Adrenal gland (tissue), 19 donors: ENCODE measurements at regions of chr11 and their contacts with region 1.

Region 1: DNA sequence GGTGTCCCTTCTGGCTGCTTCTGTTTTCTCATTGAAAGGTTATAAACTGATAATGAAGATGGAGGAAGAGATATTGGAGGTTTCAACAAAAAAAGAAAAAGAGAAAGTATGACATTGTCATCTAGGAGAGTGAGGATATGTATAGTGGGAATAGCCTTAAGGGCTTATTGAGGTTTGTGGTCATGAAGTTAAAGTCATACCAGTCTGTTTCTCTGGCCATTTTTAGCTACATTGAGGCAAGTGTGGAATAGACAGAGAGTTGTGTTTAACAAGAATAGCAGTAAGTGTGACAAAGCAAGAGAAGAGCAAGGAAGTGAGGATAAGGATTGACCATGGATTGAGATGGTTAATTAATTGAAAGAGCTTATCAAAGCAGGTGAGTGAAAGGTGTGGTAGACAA is 110.4 kb downstream of the ELP4 start:
- DNase-seq: no peak
- H3K4me3 ChIP-seq: no peak overlapping the region
- H3K27ac ChIP-seq: no peak overlapping the region
- H3K4me1 ChIP-seq: no peaks in the 10 kb centered on the region
- H3K27me3 ChIP-seq: no peaks in the 10 kb centered on the region
- CTCF ChIP-seq: no peak
- POLR2A ChIP-seq: no peak

Region 2: DNA sequence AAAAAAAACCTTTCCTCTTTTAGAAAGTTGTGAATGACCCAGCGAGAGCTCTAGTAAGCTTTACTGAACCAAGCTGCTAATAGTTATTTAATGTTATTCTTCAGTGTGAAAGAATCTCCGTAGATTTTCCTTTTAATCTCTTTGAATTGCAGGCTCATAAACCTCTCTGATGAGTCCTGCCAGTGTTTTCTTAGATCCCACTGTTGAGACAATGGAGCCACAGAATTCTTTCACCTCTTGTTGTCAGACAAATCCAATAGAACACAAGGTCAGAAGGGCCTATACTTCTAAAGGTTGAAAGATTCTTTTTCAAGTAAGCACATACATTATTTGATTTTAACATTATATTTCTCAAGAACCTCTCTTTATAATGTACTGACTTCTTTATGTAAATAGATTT is 198.2 kb before region 1 on chr11:
- intact Hi-C with region 1: no loop called
- DNase-seq: no peak
- H3K4me3 ChIP-seq: no peak overlapping the region
- H3K27ac ChIP-seq: no peak overlapping the region
- H3K4me1 ChIP-seq: no peaks in the 10 kb centered on the region
- H3K27me3 ChIP-seq: no peaks in the 10 kb centered on the region
- CTCF ChIP-seq: no peak
- POLR2A ChIP-seq: no peak

Region 3: GRCh38 chr11:31786996-31787685 is 167.2 kb after region 1 on chr11:
- intact Hi-C with region 1: no loop called
- DNase-seq: no peak
- H3K4me3 ChIP-seq: no peak overlapping the region
- H3K27ac ChIP-seq: no peak overlapping the region
- H3K4me1 ChIP-seq: no peaks in the 10 kb centered on the region
- H3K27me3 ChIP-seq: no peaks in the 10 kb centered on the region
- CTCF ChIP-seq: no peak
- POLR2A ChIP-seq: no peak

Region 4: GRCh38 chr11:31865606-31866300 is 245.8 kb after region 1 on chr11:
- intact Hi-C with region 1: loop called in 1 of 2 experiments (anchors 10 kb)
- DNase-seq: no peak
- H3K4me3 ChIP-seq: no peak overlapping the region
- H3K27ac ChIP-seq: no peak overlapping the region
- H3K4me1 ChIP-seq: no peaks in the 10 kb centered on the region
- H3K27me3 ChIP-seq: peaks cover 8% of the 10 kb centered on the region
- CTCF ChIP-seq: no peak
- POLR2A ChIP-seq: no peak

Region 5: GRCh38 chr11:32071811-32072210 is 451.8 kb after region 1 on chr11:
- intact Hi-C with region 1: no loop called
- DNase-seq: peak in 1 of 7 donors; percentile 18
- H3K4me3 ChIP-seq: no peak overlapping the region
- H3K27ac ChIP-seq: no peak overlapping the region
- H3K4me1 ChIP-seq: no peaks in the 10 kb centered on the region
- H3K27me3 ChIP-seq: peaks cover 22% of the 10 kb centered on the region
- CTCF ChIP-seq: peak in 1 of 6 experiments; percentile 17
- POLR2A ChIP-seq: no peak